Caco-2 (cell line): ENCODE measurements at regions of chr2 and their contacts with region 1.

Region 1: DNA sequence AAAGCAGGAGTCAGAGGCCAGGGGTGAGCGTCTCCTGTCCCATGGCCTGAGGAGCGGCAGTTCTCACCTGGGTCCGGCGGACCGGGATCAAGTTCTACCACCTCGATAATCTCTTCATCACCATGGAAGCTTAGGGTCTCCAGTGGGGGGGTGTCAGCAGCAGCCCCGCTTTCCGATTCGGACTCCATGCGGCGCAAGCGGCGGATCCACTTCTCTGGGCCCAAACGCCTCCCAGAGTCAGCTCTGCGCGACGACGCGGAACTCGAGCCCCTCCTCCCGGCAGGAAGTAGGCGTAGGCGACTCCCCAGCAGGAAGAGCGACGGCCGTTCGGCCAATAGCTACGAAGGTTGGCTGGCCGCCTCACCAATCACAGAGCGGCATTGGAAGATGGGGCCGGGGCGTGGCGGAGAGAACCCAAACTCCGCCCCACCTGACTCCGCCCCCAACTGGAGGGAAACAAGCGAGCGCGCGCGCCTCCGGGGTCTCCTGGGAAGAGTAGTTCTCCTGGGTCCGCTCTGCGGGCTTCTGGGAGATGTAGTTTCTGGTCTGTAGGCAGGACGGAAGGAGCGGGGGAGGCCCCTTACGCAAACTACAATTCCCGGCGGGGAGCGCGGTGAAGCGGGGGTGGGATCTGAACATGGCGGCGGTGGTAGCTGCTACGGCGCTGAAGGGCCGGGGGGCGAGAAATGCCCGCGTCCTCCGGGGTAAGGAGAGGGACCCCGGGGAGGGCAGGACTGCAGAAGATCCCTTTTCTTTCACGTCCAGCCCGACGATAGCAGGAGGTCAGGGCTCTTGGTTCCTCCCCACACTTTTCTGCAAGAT is at the starts of genes AAMP and PNKD:
- DNase-seq: peak; percentile 100
- H3K4me3 ChIP-seq: peak within 1 kb of the TSS; percentile 65
- H3K4me3 Mint-ChIP-seq: peak within 1 kb of the TSS; percentile 91
- H3K27ac Mint-ChIP-seq: peak within 1 kb of the TSS; percentile 93
- H3K4me1 ChIP-seq: peaks cover 7% of the 10 kb centered on the region
- H3K4me1 Mint-ChIP-seq: peaks cover 13% of the 10 kb centered on the region
- H3K27me3 ChIP-seq: no peaks in the 10 kb centered on the region
- H3K27me3 Mint-ChIP-seq: no peaks in the 10 kb centered on the region
- CTCF ChIP-seq: peak in 1 of 2 experiments; percentile 23
- total RNA-seq, gene AAMP: 118 and 125 TPM in 2 replicates
- total RNA-seq, gene PNKD: 39.2 and 42.9 TPM in 2 replicates

Region 2: DNA sequence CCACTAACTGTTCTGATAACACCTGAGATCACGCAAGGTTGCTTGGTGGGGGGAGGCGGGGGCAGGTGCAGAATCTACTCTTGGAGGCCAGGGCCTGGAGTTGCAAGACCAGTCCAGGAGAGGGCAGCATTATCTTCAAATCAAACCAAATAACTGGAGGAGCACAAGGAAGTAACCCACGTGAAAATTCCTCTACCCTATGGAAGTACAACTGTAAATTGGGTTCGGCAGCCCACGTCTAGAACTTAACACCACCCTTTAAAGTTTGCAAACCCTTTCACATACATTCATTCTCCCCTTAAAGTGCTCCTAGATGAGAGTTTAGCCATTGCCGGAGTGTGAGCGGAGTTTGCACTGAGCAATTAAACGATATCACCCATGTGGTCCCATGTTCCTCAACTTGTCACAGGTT is 83.7 kb before region 1 on chr2:
- CTCF ChIA-PET with region 1: no interaction called
- POLR2A ChIA-PET with region 1: no interaction called
- intact Hi-C with region 1: loop called (anchors 1 kb)
- DNase-seq: peak; percentile 78 to 83
- H3K4me3 ChIP-seq: no peak overlapping the region
- H3K4me3 Mint-ChIP-seq: no peak overlapping the region
- H3K27ac Mint-ChIP-seq: no peak overlapping the region
- H3K4me1 ChIP-seq: peaks cover 13% of the 10 kb centered on the region
- H3K4me1 Mint-ChIP-seq: no peaks in the 10 kb centered on the region
- H3K27me3 ChIP-seq: no peaks in the 10 kb centered on the region; the same call in 1 of the 2 replicates
- H3K27me3 Mint-ChIP-seq: no peaks in the 10 kb centered on the region
- CTCF ChIP-seq: peak; percentile 82 to 87

Region 3: DNA sequence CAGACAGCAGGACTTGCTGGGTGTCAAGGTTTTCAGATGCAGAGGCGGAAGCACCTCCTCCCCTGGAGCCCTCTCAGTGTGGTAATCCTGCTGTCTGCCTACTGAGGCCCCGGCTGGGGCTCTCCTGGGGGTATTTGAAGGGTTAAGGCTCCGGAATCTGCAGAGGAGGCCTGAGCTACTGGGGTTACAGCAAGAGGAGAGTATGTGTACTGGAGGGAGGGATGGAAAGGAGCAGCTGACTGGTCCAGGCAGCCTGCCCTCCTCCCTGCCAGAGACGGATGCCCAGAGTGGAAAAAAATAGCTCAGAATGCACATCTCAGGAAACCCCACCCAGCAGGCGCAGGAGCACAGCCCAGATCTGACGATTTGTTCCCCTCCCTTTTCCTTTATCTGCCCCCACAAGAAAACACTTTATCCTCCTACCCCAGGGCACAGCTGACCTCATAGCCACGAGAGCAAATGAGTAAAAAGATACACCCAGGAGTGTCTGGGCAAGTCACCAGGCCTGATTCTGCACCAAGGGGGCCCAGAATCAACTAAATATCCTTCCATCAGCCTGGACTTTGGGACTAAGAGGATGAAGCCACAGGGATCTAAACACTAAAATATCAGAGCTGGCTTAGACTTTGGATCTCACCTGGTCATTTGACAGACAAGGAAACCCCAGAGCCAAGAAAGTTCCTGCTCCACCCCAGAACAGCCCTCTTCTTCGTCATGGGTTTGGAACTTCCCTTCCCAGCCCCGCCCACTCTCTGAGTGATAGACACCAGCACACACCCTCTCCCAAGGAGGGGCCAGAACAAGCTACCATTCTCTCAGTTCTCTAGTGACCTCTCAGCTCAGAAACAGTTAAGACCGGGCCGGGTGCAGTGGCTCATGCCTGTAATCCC is 16.7 kb after region 1 on chr2:
- CTCF ChIA-PET with region 1: interaction called, 121 read pairs
- POLR2A ChIA-PET with region 1: interaction called, 20 read pairs
- intact Hi-C with region 1: loop called (anchors 1 kb)
- DNase-seq: peak; percentile 91 to 95
- H3K4me3 ChIP-seq: no peak overlapping the region
- H3K4me3 Mint-ChIP-seq: peak overlapping the region; percentile 68
- H3K27ac Mint-ChIP-seq: peak overlapping the region; percentile 97
- H3K4me1 ChIP-seq: peaks cover 93% of the 10 kb centered on the region
- H3K4me1 Mint-ChIP-seq: peaks cover 59% of the 10 kb centered on the region
- H3K27me3 ChIP-seq: no peaks in the 10 kb centered on the region
- H3K27me3 Mint-ChIP-seq: no peaks in the 10 kb centered on the region
- CTCF ChIP-seq: no peak

Region 4: DNA sequence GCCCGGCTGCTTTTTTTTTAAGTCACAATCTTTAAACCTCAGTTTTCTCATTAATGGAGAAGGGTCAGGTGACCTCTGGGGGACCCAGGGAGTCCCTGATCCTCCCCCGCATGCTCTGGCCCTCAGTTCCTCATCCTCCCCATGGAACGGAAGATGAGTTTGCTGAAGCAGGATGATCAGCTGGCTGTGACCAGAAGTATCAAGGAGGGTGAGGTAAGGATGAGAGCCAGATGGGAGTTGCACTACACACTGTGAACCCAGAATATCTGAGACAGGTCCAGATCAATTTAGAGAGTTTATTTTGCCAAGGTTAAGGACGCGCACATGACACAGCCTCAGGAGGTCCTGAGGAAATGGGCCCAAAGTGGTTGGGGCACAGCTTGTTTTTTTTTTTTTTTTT is 90.3 kb after region 1 on chr2:
- CTCF ChIA-PET with region 1: interaction called, 10 read pairs
- POLR2A ChIA-PET with region 1: no interaction called
- intact Hi-C with region 1: loop called (anchors 1 kb)
- DNase-seq: no peak
- H3K4me3 ChIP-seq: no peak overlapping the region
- H3K4me3 Mint-ChIP-seq: no peak overlapping the region
- H3K27ac Mint-ChIP-seq: peak overlapping the region; percentile 48
- H3K4me1 ChIP-seq: peaks cover 50% of the 10 kb centered on the region
- H3K4me1 Mint-ChIP-seq: peaks cover 18% of the 10 kb centered on the region
- H3K27me3 ChIP-seq: no peaks in the 10 kb centered on the region
- H3K27me3 Mint-ChIP-seq: no peaks in the 10 kb centered on the region
- CTCF ChIP-seq: no peak

Region 5: DNA sequence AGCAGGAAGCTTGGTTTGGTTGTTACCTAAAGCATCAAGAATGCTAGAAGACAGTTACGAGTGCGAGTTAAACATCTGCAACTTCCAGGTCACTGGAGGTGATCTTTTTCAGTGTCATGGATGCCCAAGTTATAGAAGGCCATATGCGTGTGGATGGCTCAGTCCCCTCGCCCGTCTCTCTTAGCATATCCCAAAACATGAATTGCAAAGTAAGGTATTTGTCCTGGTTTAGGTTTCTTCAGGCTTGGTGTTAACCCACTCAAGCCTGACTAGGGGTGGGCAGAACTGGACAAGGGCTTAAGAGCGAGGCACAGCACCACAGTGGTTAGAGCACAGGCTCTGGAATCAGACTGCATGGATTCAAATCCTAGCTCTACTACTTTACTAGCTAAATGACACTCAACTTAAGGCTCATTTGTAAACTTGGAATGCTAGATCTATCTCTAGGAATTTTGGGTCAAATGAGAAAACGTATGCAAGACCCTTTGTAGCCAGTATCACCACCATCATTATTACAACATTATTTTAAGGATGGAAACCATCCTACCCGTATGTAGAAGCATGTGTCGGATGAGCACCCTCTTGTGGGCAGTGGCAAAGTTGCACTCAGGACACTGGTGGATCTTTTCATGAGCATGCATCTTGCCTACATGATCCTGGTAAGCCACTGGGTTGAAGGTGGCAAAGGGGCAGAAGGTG is 378.1 kb after region 1 on chr2:
- CTCF ChIA-PET with region 1: no interaction called
- POLR2A ChIA-PET with region 1: no interaction called
- intact Hi-C with region 1: loop called (anchors 10 kb)
- DNase-seq: peak; percentile 60 to 62
- H3K4me3 ChIP-seq: no peak overlapping the region
- H3K4me3 Mint-ChIP-seq: no peak overlapping the region
- H3K27ac Mint-ChIP-seq: no peak overlapping the region
- H3K4me1 ChIP-seq: no peaks in the 10 kb centered on the region
- H3K4me1 Mint-ChIP-seq: no peaks in the 10 kb centered on the region
- H3K27me3 ChIP-seq: no peaks in the 10 kb centered on the region
- H3K27me3 Mint-ChIP-seq: no peaks in the 10 kb centered on the region
- CTCF ChIP-seq: peak; percentile 80 to 91